ENCODE measurements at regions of chr9 and their contacts with region 1.

Region 1: GRCh38 chr9:112836394-112836793 is 54.3 kb downstream of the SLC46A2 start:
- DNase-seq: no peak
- H3K4me3 Mint-ChIP-seq: no peak overlapping the region
- H3K27ac Mint-ChIP-seq: no peak overlapping the region
- H3K4me1 Mint-ChIP-seq: no peaks in the 10 kb centered on the region
- H3K27me3 Mint-ChIP-seq: no peaks in the 10 kb centered on the region

Region 2: DNA sequence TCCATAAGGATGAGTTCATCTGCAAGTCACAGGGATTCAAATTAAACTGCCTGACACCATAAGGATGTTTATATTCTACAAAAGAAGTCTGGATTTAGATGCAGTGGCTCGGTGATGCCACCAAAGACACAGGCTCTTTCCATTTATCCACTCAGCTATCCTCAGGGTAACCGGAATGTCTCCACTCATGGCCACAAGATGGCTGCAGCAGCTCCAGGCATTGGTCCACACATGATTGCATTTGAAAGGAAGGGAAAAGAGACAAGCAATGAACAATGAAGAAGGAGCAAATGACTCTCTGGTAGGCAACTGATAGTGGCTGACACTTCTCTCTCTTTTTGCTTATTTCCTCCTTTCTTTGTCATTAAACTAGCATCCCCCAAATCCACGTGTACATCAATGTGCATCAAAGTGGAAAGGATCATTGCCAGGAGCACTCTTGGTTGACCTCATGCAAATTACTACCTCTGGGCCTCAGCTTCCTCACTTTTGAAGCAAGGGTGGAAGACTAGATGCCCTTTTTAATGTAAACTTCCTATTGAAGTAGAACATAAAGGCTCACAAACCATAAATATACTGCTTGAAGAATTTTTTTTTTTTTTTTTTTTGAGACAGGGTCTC is 93.1 kb before region 1 on chr9:
- CTCF ChIA-PET with region 1: no interaction called
- POLR2A ChIA-PET with region 1: no interaction called
- intact Hi-C with region 1: no loop called
- DNase-seq: no peak
- H3K4me3 Mint-ChIP-seq: no peak overlapping the region
- H3K27ac Mint-ChIP-seq: no peak overlapping the region
- H3K4me1 Mint-ChIP-seq: peaks cover 10% of the 10 kb centered on the region
- H3K27me3 Mint-ChIP-seq: no peaks in the 10 kb centered on the region

Region 3: GRCh38 chr9:112809351-112809848 is 27.0 kb before region 1 on chr9:
- CTCF ChIA-PET with region 1: no interaction called
- POLR2A ChIA-PET with region 1: no interaction called
- intact Hi-C with region 1: no loop called
- DNase-seq: no peak
- H3K4me3 Mint-ChIP-seq: no peak overlapping the region
- H3K27ac Mint-ChIP-seq: no peak overlapping the region
- H3K4me1 Mint-ChIP-seq: no peaks in the 10 kb centered on the region
- H3K27me3 Mint-ChIP-seq: no peaks in the 10 kb centered on the region

Region 4: GRCh38 chr9:112898872-112899311 is 62.5 kb after region 1 on chr9:
- CTCF ChIA-PET with region 1: interaction called, 114 read pairs
- POLR2A ChIA-PET with region 1: no interaction called
- intact Hi-C with region 1: no loop called
- DNase-seq: no peak
- H3K4me3 Mint-ChIP-seq: no peak overlapping the region
- H3K27ac Mint-ChIP-seq: no peak overlapping the region
- H3K4me1 Mint-ChIP-seq: peaks cover 3% of the 10 kb centered on the region
- H3K27me3 Mint-ChIP-seq: peaks cover 30% of the 10 kb centered on the region